Tibial artery (tissue), 4 donors: ENCODE measurements at regions of chr3 and their contacts with region 1.

Region 1: GRCh38 chr3:124467980-124468902 is 262.0 kb upstream of the UMPS start:
- DNase-seq: no peak
- H3K4me3 ChIP-seq: no peak overlapping the region
- H3K27ac ChIP-seq: peak overlapping the region in 1 of 2 donors; percentile 36
- H3K4me1 ChIP-seq: peaks cover 0 to 2% (median 0%) of the 10 kb centered on the region in 4 donors
- H3K27me3 ChIP-seq: no peaks in the 10 kb centered on the region
- CTCF ChIP-seq: peak; percentile 93 to 98

Region 2: DNA sequence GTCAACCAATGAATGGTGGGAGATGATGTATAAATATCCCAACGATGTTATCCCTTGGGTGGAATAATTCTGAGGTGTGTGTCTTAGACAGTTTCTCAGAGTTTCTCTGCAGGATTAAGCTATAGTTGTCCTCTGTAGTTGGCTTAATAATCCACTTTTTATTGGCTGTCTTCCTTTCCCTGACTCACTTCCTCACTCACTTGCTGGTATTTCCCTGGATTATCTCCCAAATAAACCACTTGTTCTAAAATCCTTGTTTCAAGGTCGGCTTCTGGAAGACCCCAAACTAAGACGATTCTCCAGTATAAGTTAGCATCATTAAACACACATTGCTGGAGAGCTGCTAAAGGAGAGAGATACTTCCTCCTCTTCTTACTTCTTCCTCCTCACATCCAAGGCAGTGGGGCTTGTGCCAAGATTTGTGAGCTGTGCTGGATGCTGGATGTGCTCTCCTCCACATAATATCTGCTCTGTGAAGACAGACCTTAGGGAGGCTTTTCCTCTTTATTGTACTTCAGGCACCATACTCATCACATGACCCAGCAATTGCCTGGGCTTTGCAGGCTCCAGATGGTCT is 453.8 kb before region 1 on chr3:
- intact Hi-C with region 1: loop called (anchors 10 kb)
- DNase-seq: no peak
- H3K4me3 ChIP-seq: no peak overlapping the region
- H3K27ac ChIP-seq: peak overlapping the region; percentile 21 to 56
- H3K4me1 ChIP-seq: peaks cover 0 to 36% (median 6%) of the 10 kb centered on the region in 4 donors
- H3K27me3 ChIP-seq: no peaks in the 10 kb centered on the region
- CTCF ChIP-seq: no peak

Region 3: DNA sequence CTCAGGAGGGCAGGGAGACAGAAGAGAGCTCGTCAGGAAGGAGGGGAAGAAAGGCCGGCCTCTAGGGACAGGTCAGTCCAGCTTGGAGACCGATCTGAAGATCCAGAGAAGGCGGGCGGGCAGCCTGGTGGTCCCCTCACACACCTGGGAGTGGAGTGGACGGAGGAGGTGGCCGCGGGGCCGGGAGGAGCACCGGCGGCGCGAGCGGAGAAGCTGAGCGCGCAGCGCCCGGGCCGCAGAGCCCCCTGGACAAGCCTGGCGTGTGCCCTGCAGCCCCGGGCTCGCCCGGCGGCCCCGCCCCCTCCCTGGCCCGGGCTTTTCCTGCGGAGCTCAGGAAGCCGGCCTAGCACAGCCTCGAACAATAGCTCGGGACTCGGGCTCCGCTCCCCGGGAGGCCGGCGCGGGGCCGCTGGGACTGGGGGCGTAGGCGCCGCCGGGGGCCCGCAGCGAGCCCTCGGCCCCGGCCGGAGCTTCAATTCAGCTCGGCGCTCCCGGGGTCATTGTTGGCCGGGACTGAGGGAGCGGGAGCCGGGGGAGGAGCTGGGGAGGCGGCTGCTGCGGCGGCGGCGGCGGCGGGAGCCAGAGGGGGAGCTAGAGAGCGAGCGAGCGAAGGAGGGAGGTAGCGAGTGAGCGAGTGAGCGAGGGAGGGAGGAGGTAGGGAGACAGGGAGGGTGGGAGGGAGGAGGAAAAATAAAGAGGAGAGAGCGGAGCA is 435.4 kb before region 1 on chr3:
- intact Hi-C with region 1: loop called (anchors 5 kb)
- DNase-seq: peak; percentile 76 to 92
- H3K4me3 ChIP-seq: peak overlapping the region; percentile 80 to 90
- H3K27ac ChIP-seq: peak overlapping the region; percentile 86 to 96
- H3K4me1 ChIP-seq: peaks cover 0 to 28% (median 4%) of the 10 kb centered on the region in 4 donors
- H3K27me3 ChIP-seq: no peaks in the 10 kb centered on the region
- CTCF ChIP-seq: peak; percentile 72 to 83

Region 4: DNA sequence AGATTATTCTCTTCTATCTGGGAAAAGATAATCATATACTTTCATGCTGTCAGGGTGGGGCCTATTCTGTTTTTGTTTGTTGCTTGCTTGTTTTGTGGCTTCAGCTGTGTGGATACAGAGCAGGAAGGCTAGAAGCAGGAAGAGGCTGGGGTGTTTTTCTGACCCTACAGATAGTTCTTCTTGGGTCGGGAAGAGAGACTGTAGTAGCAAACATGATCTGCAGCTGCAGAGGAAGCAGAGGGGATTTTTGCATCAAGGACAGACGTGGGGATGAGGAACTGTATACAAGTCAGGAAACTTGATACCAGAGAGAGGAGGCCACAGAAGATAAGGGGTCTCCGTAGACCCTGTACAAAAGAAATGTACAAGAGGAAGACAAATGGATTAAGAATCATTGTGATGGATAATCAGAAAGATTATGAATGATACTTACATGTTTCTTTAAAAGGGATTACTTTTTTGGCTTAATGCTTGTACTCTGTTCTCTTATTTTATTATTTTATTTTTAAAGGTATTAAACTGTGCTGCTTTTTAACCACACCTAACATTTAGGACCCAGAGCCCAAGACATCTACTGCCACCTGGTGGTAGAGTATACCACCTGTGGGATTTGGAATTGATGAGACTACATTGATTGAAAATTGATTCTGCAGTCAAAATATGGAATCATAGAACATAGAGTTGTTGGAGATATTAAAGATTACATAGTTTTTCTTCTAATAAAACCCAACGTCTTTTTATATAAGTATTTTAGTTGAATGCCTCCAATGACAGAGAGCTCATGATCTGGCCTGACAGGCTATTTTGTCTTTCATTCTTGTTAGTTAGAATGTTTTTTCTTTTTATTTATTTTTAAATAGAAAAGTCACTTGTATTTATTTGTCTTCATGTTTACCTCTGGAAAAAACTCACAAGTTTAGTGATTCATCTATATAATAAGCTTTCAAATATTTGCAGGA is 389.0 kb before region 1 on chr3:
- intact Hi-C with region 1: loop called (anchors 5 kb)
- DNase-seq: no peak
- H3K4me3 ChIP-seq: no peak overlapping the region
- H3K27ac ChIP-seq: peak overlapping the region in 1 of 2 donors; percentile 9
- H3K4me1 ChIP-seq: peaks cover 0 to 70% (median 21%) of the 10 kb centered on the region in 4 donors
- H3K27me3 ChIP-seq: no peaks in the 10 kb centered on the region
- CTCF ChIP-seq: peak; percentile 67 to 73

Region 5: DNA sequence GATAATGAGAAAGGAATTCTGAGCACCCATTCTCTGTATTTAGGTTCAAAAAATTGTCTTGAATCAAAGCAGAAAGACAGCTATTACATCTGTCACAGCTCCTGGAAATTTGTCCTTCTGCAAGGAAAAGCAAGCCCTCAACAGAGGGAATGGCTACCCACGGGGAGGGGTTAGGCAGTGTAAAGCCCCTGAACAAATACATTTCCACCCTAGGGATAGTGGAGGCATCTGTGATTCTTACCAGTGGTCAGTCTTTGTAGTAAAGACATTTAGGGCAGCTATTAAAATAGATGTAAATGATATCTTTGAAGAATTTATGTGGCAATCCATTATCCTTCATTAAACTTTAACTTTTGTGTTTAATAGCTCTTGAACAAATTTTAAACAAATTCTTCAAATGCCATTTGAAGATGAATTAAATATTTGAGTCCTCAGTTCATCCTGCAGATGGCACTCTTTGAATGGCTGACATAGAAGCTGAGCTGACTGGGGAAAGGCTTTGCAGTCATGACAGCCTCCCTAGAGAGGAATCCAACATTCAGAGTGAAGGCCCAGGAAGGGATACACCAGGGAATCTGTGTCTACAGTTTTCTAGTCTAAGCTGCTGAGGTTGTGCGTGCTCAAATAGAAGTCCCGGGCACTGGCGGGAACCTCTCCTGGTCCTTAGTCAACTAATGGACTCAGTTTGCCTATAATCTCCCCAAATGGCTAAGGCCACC is 116.7 kb before region 1 on chr3:
- intact Hi-C with region 1: loop called (anchors 5 kb)
- DNase-seq: no peak
- H3K4me3 ChIP-seq: no peak overlapping the region
- H3K27ac ChIP-seq: peak overlapping the region in 1 of 2 donors; percentile 42
- H3K4me1 ChIP-seq: peaks cover 0 to 16% (median 0%) of the 10 kb centered on the region in 4 donors
- H3K27me3 ChIP-seq: no peaks in the 10 kb centered on the region
- CTCF ChIP-seq: peak; percentile 46 to 68

Region 6: GRCh38 chr3:124486324-124486723 is 18.1 kb after region 1 on chr3:
- intact Hi-C with region 1: no loop called
- DNase-seq: no peak
- H3K4me3 ChIP-seq: no peak overlapping the region
- H3K27ac ChIP-seq: no peak overlapping the region
- H3K4me1 ChIP-seq: no peaks in the 10 kb centered on the region
- H3K27me3 ChIP-seq: no peaks in the 10 kb centered on the region
- CTCF ChIP-seq: no peak

Region 7: GRCh38 chr3:124529826-124530571 is 61.8 kb after region 1 on chr3:
- intact Hi-C with region 1: no loop called
- DNase-seq: no peak
- H3K4me3 ChIP-seq: no peak overlapping the region
- H3K27ac ChIP-seq: no peak overlapping the region
- H3K4me1 ChIP-seq: no peaks in the 10 kb centered on the region
- H3K27me3 ChIP-seq: no peaks in the 10 kb centered on the region
- CTCF ChIP-seq: no peak

Region 8: DNA sequence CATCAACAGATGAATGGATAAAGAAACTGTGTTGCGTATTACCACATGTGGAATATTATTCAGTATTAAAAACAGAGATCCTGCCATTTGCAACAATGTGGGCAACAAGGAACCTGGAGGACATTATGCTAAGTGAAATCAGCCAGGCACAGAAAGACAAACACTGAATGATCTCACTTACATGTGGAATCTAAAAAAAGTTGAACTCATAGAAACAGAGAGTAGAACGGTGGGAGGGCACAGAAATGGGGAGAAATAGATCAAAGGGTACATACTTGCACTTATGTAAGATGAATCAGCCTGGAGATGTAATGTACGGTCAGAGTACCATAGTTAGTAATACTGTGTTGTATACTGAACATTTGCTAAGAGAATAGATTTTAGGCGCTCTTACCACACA is 496.1 kb after region 1 on chr3:
- intact Hi-C with region 1: no loop called
- DNase-seq: no peak
- H3K4me3 ChIP-seq: no peak overlapping the region
- H3K27ac ChIP-seq: no peak overlapping the region
- H3K4me1 ChIP-seq: no peaks in the 10 kb centered on the region
- H3K27me3 ChIP-seq: no peaks in the 10 kb centered on the region
- CTCF ChIP-seq: no peak